Tibial artery (tissue), 4 donors: ENCODE measurements at regions of chr2 and their contacts with region 1.

Region 1: GRCh38 chr2:136384531-136385303 is 266.8 kb upstream of the CXCR4 start:
- DNase-seq: no peak
- H3K4me3 ChIP-seq: no peak overlapping the region
- H3K27ac ChIP-seq: no peak overlapping the region
- H3K4me1 ChIP-seq: no peaks in the 10 kb centered on the region
- H3K27me3 ChIP-seq: no peaks in the 10 kb centered on the region
- CTCF ChIP-seq: peak; percentile 22 to 30

Region 2: GRCh38 chr2:134594399-134594798 is 1790.3 kb before region 1 on chr2:
- intact Hi-C with region 1: no loop called
- DNase-seq: no peak
- H3K4me3 ChIP-seq: no peak overlapping the region
- H3K27ac ChIP-seq: no peak overlapping the region
- H3K4me1 ChIP-seq: no peaks in the 10 kb centered on the region
- H3K27me3 ChIP-seq: no peaks in the 10 kb centered on the region
- CTCF ChIP-seq: no peak

Region 3: DNA sequence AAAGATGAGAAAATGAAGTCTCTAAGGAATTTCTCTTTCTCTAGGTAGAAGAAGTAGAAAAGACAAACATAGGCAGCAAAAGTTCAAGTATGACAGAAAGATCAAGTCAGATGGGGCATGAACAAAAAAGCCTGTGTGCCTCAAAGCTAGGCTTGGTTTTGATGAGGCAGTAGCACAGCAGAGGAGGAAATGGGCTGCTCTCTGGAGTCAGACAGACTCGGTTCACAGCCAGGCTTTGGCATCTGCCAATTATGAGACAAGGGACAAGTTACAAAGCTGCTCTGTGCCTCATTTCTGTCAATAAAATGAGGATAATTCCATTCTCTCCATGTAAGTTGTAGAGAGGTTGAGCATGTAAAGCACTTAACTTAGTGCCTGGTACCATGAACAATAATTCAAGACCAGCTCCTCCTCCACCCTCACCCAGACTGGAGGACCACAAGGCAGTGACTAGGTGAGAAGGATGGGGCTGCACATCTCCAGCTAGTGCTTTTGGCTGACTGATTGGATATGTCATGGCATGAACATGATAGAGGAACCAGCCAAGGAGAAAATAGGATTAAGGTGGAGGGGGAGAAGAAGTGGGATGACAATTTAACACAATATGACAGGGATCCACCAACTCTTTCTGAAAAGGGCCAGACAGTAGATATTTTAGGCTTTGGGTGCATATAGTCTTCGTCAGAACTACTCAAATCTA is 1750.5 kb before region 1 on chr2:
- intact Hi-C with region 1: no loop called
- DNase-seq: no peak
- H3K4me3 ChIP-seq: no peak overlapping the region
- H3K27ac ChIP-seq: no peak overlapping the region
- H3K4me1 ChIP-seq: peaks cover 0 to 14% (median 0%) of the 10 kb centered on the region in 4 donors
- H3K27me3 ChIP-seq: no peaks in the 10 kb centered on the region
- CTCF ChIP-seq: no peak

Region 4: DNA sequence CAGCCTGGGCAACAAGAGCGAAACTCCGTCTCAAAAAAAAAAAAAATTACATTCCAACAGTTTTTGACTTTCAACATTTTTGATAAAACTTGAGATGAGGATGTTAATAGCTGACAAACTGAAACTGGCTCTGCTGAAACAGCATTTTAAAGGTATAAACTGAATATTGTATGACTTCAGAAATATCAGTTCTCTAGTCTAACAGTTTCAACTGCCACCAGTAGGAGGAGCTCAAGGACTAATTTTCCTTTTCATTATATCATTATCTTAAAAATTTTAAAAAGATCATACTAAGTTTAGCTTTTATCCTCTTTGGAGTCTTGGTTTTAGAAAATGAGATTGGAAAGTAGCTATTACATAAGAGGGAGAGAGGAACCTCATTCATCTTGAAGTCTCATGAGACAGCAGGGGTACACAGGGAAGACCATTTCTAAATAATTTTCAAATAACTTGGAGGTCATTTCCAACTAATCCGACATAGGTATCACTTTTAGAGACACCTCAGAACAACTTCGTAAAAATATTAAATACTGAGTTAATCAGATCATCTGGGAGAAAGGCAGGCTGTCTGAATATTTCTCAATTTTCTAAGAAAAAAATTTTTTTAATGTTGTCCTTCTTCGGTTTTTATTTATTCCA is 470.9 kb before region 1 on chr2:
- intact Hi-C with region 1: loop called (anchors 10 kb)
- DNase-seq: no peak
- H3K4me3 ChIP-seq: no peak overlapping the region
- H3K27ac ChIP-seq: no peak overlapping the region
- H3K4me1 ChIP-seq: no peaks in the 10 kb centered on the region
- H3K27me3 ChIP-seq: no peaks in the 10 kb centered on the region
- CTCF ChIP-seq: peak; percentile 54 to 76